Posterior vena cava (tissue), 2 donors: ENCODE measurements at regions of chr13 and their contacts with region 1.

Region 1: DNA sequence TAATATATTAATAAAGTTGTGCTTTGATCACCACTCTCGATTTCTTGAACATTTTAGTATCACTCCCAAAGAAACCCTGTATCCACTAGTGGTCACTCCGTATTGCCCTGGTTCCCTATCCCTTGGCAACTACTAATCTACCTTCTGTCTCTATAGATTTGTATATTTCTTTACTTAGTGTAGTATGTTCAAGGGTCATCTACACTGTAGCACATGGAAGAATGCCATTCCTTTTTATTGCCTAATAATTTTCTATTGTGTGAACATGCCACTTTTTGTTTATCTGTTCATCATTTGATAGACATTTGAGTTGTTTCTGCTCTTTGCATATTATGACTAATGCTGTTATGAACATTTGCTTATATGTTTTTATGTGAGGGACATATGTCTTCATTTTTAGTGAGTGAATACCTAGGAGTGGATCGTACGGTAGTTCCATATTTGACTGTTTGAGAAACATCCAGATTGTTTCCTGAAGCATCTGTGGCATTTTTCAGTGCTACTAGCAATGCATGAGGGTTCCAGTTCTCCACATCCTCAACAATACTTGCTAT is 254.0 kb downstream of the GPC6 start:
- DNase-seq: no peak

Region 2: GRCh38 chr13:93446238-93446637 is 34.4 kb before region 1 on chr13:
- intact Hi-C with region 1: no loop called
- DNase-seq: no peak

Region 3: DNA sequence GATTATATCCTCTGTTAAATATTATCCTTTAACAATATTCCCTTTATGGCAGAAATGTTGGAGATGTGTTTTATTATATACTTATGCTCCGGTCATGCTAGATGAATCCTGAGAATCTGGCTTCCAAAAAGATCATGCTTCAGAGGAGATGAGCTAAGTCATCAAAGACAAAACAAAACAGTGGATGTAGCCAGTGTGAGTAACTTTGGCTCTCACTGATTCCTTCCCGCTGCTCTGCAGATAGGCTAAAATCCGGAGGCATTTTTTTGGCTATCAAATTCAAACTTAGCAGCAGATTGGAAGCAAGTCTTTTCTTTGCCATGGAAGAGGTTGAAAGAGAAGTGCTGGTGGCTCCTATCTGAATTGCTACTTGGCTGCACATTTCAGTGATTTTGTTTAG is 41.9 kb after region 1 on chr13:
- intact Hi-C with region 1: no loop called
- DNase-seq: no peak

Region 4: GRCh38 chr13:94323764-94324758 is 843.4 kb after region 1 on chr13:
- intact Hi-C with region 1: loop called in 1 of 2 experiments (anchors 5 kb)
- DNase-seq: no peak